ENCODE measurements at regions of chr4 and their contacts with region 1.

Region 1: DNA sequence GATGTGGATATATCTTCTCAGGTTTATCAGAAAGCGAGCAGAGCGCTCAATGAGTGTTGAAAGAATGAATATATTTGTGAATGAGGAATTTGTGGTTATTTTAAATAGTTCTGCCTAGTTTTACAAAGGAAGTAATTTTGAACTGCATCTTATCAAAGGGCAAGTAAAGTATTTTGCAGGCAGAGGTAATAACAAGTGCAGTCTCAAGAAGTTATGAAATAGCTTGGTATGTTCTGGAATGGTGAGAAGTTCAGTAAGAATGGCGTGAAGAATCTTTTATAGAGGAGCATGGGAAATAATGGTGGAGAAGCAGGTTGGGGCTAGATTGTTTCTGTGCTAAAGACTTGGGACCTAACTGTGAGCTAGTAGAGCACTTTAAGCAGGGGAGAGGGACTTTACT is 10.9 kb downstream of the TMA16 start:
- DNase-seq: no peak
- H3K27ac ChIP-seq: no peak overlapping the region
- CTCF ChIP-seq: no peak

Region 2: GRCh38 chr4:163419074-163419473 is 86.3 kb before region 1 on chr4:
- CTCF ChIA-PET with region 1: interaction called, 11 read pairs
- POLR2A ChIA-PET with region 1: no interaction called
- DNase-seq: no peak
- H3K27ac ChIP-seq: no peak overlapping the region
- CTCF ChIP-seq: no peak